HCT116 (cell line): ENCODE measurements at regions of chr9 and their contacts with region 1.

Region 1: DNA sequence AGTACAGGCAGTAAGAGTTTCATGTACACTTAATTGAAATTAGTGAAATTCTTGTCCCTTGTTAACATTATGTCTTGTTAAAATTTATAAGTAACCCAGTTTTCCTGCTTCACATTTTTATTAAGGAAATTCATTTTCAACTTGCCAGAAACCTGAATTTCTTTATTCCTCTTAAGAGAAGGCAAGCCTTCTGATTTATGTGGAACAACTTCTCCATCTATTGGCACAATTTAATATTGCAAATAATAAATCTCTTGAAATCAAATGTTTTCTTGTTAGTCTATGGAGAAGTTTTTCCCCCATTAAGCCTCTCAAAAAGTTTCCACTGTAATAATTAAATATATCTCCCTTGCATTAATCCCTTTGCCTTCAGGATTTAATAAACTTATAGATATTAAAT is 33.8 kb upstream of the ACO1 start:
- DNase-seq: peak; percentile 10
- ATAC-seq: no peak
- H3K4me3 ChIP-seq: no peak overlapping the region
- H3K27ac ChIP-seq: no peak overlapping the region
- H3K4me1 ChIP-seq: no peaks in the 10 kb centered on the region
- H3K27me3 ChIP-seq: 0 out of 2 replicates have a peak, but pooled peaks cover 3% of the 10 kb centered on the region
- CTCF ChIP-seq: peak in 2 of 3 experiments; percentile 8 to 54; a peak in 3 of 6 replicates
- POLR2A ChIP-seq: no peak
- RAD21 ChIP-seq: peak; percentile 57

Region 2: GRCh38 chr9:32142074-32142473 is 208.6 kb before region 1 on chr9:
- CTCF ChIA-PET with region 1: no interaction called
- POLR2A ChIA-PET with region 1: no interaction called
- RAD21 ChIA-PET with region 1: no interaction called
- intact Hi-C with region 1: loop called (anchors 5 kb)
- DNase-seq: no peak
- ATAC-seq: no peak
- H3K4me3 ChIP-seq: no peak overlapping the region
- H3K27ac ChIP-seq: no peak overlapping the region
- H3K4me1 ChIP-seq: no peaks in the 10 kb centered on the region
- H3K27me3 ChIP-seq: no peaks in the 10 kb centered on the region
- CTCF ChIP-seq: no peak
- POLR2A ChIP-seq: no peak
- RAD21 ChIP-seq: no peak

Region 3: GRCh38 chr9:32331240-32331639 is 19.4 kb before region 1 on chr9:
- CTCF ChIA-PET with region 1: no interaction called
- POLR2A ChIA-PET with region 1: no interaction called
- RAD21 ChIA-PET with region 1: no interaction called
- intact Hi-C with region 1: no loop called
- DNase-seq: no peak
- ATAC-seq: no peak
- H3K4me3 ChIP-seq: no peak overlapping the region
- H3K27ac ChIP-seq: no peak overlapping the region
- H3K4me1 ChIP-seq: no peaks in the 10 kb centered on the region
- H3K27me3 ChIP-seq: no peaks in the 10 kb centered on the region
- CTCF ChIP-seq: no peak
- POLR2A ChIP-seq: no peak
- RAD21 ChIP-seq: no peak